ENCODE measurements at regions of chr17 and their contacts with region 1.

Region 1: GRCh38 chr17:49227436-49228261 is 2.9 kb downstream of the PHOSPHO1 start:
- DNase-seq: peak; percentile 88
- ATAC-seq: peak; percentile 64
- H3K4me3 ChIP-seq: no peak overlapping the region
- H3K27ac ChIP-seq: no peak overlapping the region
- H3K4me1 ChIP-seq: peaks cover 12% of the 10 kb centered on the region; the same call in 1 of the 2 replicates
- H3K27me3 ChIP-seq: peaks cover 24% of the 10 kb centered on the region
- CTCF ChIP-seq: peak; percentile 97

Region 2: DNA sequence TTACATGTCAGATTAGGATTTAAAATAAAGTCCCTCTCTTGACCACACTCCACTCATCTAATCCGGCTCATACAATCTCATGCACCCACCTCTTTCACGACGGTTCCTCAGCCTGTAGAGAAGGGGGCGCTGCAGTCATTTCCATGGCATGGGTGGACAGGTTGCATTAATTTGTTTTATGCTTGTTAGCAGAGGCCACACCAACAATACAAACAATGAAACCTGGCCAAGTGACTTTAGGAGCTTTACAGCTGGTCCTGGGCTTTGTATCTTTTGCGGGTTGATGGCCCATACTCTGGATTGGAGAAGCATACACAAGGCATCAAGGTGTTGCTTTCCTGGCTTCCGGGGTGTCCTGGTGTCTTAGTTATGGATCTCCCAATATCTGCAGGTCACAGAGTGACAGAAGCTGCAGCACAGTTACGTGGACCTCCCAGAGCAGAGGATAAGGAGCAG is 273.3 kb before region 1 on chr17:
- CTCF ChIA-PET with region 1: interaction called, 3 read pairs
- POLR2A ChIA-PET with region 1: no interaction called
- intact Hi-C with region 1: loop called (anchors 1 kb)
- DNase-seq: peak; percentile 81
- ATAC-seq: peak; percentile 97
- H3K4me3 ChIP-seq: no peak overlapping the region
- H3K27ac ChIP-seq: no peak overlapping the region
- H3K4me1 ChIP-seq: peaks cover 4% of the 10 kb centered on the region; the same call in 1 of the 2 replicates
- H3K27me3 ChIP-seq: no peaks in the 10 kb centered on the region
- CTCF ChIP-seq: peak; percentile 92

Region 3: DNA sequence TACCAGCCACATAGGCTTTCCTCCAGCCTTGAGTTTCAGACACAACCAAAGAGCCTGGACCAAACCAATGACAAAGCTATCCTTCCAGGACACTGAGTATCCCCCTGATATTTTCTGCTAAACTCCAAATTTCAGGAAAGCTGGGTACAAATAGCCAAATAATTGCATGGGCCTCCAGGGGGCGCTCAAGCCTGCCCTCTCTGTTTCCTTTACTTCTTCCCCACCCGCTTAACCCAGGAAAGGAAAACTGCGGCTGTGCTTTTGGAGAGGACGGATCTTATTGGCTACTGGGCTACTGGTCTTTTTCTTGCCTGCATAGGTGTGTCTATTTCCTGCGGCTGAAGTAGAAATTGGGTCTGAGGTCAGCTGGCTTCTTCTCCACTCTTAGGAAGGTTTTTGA is 47.3 kb before region 1 on chr17:
- CTCF ChIA-PET with region 1: interaction called, 11 read pairs
- POLR2A ChIA-PET with region 1: no interaction called
- intact Hi-C with region 1: loop called (anchors 1 kb)
- DNase-seq: peak; percentile 67
- ATAC-seq: peak; percentile 75
- H3K4me3 ChIP-seq: no peak overlapping the region
- H3K27ac ChIP-seq: no peak overlapping the region
- H3K4me1 ChIP-seq: no peaks in the 10 kb centered on the region
- H3K27me3 ChIP-seq: no peaks in the 10 kb centered on the region
- CTCF ChIP-seq: peak; percentile 95

Region 4: GRCh38 chr17:49191917-49192741 is 35.5 kb before region 1 on chr17:
- CTCF ChIA-PET with region 1: no interaction called
- POLR2A ChIA-PET with region 1: no interaction called
- intact Hi-C with region 1: loop called (anchors 2 kb)
- DNase-seq: peak; percentile 97
- ATAC-seq: peak; percentile 55
- H3K4me3 ChIP-seq: peak overlapping the region; percentile 79
- H3K27ac ChIP-seq: peak overlapping the region; percentile 77
- H3K4me1 ChIP-seq: peaks cover 10% of the 10 kb centered on the region
- H3K27me3 ChIP-seq: no peaks in the 10 kb centered on the region
- CTCF ChIP-seq: peak; percentile 55

Region 5: GRCh38 chr17:49343273-49343672 is 115.6 kb after region 1 on chr17:
- CTCF ChIA-PET with region 1: no interaction called
- POLR2A ChIA-PET with region 1: no interaction called
- intact Hi-C with region 1: no loop called
- DNase-seq: peak; percentile 15
- ATAC-seq: peak; percentile 29; the same call in 1 of the 2 replicates
- H3K4me3 ChIP-seq: no peak overlapping the region
- H3K27ac ChIP-seq: no peak overlapping the region
- H3K4me1 ChIP-seq: no peaks in the 10 kb centered on the region
- H3K27me3 ChIP-seq: no peaks in the 10 kb centered on the region
- CTCF ChIP-seq: no peak

Region 6: GRCh38 chr17:49365667-49366066 is 138.0 kb after region 1 on chr17:
- CTCF ChIA-PET with region 1: no interaction called
- POLR2A ChIA-PET with region 1: no interaction called
- intact Hi-C with region 1: no loop called
- DNase-seq: peak; percentile 57
- ATAC-seq: peak; percentile 13; the same call in 1 of the 2 replicates
- H3K4me3 ChIP-seq: no peak overlapping the region
- H3K27ac ChIP-seq: no peak overlapping the region
- H3K4me1 ChIP-seq: peaks cover 10% of the 10 kb centered on the region
- H3K27me3 ChIP-seq: no peaks in the 10 kb centered on the region
- CTCF ChIP-seq: peak; percentile 53

Measured in PC-3 (cell line).